Activated T-helper 2 cell treated with anti-CD3 and anti-CD28 coated beads, Interferon-gamma antibody, Interleukin-2, Interleukin-4, amounts not matched to agents 10 μg/mL and 5 μg/mL and 100 μg/mL, durations not matched to agents 14 hours and 24 hours and 36 hours (primary cell): ENCODE measurements at regions of chr11 and their contacts with region 1.

Region 1: GRCh38 chr11:119236490-119236889 is 30.4 kb downstream of the CBL start:
- DNase-seq: no peak
- H3K4me3 Mint-ChIP-seq: peak overlapping the region; percentile 4
- H3K27ac Mint-ChIP-seq: peak overlapping the region; percentile 87
- H3K4me1 Mint-ChIP-seq: peaks cover 43% of the 10 kb centered on the region
- H3K27me3 Mint-ChIP-seq: no peaks in the 10 kb centered on the region

Region 2: DNA sequence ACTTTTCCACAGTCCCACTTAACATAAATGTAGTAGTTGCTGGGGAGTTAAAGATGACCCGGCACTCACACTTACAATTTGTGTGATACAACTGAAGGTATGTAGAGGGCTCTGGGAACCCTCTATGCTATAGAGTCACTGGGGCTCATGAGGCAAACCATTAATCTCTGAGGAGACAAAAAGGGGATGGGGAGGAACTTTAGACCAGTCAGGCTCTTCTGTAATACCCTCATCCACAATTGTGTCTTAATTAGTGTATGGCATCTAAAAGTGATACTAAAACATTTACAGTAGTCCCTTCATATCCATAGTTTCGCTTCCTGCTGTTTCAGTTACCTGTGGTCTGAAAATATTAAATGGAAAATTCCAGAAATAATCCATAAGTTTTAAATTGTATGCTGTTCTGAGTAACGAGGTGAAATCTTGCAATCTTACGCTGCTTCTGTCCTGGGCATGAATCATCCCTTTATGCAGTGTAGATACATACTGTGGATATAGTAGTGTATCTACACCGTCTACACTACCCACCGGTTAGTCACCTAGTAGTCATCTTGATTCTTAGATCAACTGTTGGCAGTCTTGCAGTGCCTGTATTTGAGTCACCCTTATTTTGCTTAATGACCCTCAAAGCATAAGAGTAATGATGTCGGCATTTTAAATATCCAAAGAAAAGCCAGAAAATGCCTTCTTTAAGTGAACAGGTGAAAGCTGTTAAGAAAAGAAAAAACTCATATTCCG is 18.2 kb before region 1 on chr11:
- intact Hi-C with region 1: loop called (anchors 2 kb)
- DNase-seq: no peak
- H3K4me3 Mint-ChIP-seq: no peak overlapping the region
- H3K27ac Mint-ChIP-seq: peak overlapping the region; percentile 69
- H3K4me1 Mint-ChIP-seq: peaks cover 29% of the 10 kb centered on the region
- H3K27me3 Mint-ChIP-seq: no peaks in the 10 kb centered on the region